Head of caudate nucleus (tissue), 42 donors: ENCODE measurements at regions of chr3 and their contacts with region 1.

Region 1: GRCh38 chr3:124995460-124995994 is 60.3 kb downstream of the HEG1 start:
- DNase-seq: peak; percentile 37 to 87 (median 72)

Region 2: GRCh38 chr3:125055913-125056745 is 60.6 kb after region 1 on chr3 and contains the start of gene HEG1:
- intact Hi-C with region 1: loop called (anchors 5 kb)
- DNase-seq: peak; percentile 49 to 93 (median 83)

Region 3: DNA sequence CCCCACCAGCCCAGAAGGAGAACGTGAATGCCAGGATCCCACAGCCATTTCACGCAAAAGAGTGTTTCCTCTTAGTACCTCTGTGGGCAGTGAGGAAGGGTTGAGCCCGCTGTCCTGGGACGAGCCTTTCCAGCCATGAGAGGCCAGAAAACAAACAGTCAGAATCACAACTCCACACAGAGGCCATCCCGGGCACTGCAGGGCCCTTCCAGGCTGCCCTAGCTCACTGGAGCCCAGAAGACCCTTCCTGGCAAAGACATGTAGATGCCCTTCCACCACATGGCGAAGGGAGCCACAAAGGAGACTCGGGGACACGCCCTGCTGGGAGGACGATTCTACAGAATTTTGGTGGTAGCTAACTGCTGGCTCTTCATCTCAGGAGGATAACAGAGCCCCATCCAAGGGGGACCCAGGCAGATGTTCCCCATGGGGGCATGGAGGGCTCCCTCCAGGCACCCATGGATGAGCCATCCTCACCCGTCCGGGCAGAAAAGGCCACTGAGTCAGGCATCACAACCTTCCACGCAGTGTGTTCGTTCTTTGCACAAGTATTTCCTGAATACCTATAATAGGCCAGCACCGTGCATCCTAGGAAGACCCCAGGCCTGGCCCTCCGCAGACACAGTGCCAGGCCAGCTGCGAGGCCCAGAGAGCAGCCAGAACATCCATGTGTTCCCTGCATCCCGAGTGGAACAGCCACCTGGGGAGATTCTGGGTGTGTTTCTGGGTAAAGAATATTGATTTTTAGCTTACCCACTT is 169.8 kb after region 1 on chr3:
- intact Hi-C with region 1: loop called (anchors 10 kb)
- DNase-seq: peak in 20 of 42 donors; percentile 28 to 69 (median 44)

Region 4: DNA sequence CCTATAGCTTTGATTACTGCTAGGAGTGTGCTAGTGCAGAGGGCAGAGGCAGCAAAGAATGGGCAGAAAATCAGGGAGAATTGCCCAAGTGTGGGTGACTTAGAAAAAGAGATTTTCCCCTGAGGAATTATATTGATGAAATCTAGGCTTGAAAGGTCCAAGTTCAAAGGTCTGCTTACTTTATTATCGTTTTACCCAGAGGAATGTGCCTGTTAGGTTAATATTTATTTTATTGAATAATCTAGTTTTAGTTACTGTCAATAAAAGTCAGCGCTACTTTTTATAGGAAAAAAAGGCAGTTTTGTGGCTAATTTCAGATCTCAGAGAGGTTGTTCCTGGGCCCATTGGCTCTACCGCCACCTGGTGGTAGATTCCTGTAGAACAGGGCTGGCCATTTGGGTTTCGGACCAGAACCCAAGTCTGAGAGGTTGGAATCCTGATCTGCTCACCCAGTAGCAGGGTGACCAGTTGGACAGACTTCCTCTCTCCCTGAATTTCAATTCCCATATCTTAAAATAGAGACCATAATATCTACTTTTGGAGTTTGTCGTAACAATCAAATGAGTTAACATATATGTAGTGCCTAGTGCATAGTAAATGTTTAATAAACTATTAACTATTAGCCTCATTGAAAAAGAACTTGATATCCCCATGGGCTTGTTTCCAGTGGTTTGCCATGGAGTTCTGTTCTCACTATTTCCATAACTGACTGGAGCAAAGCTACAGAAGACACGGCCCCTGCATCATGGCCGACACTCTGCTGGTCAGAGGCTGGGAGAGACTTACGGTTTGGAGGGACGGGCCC is 442.3 kb after region 1 on chr3:
- intact Hi-C with region 1: loop called (anchors 5 kb)
- DNase-seq: peak in 41 of 42 donors; percentile 16 to 89 (median 72)